ENCODE measurements at regions of chr14 and their contacts with region 1.

Region 1: GRCh38 chr14:55832974-55833373 is 253.0 kb downstream of the KTN1 start:
- DNase-seq: no peak
- H3K4me3 Mint-ChIP-seq: no peak overlapping the region
- H3K27ac Mint-ChIP-seq: no peak overlapping the region
- H3K4me1 Mint-ChIP-seq: no peaks in the 10 kb centered on the region
- H3K27me3 Mint-ChIP-seq: no peaks in the 10 kb centered on the region
- CTCF ChIP-seq: no peak

Region 2: GRCh38 chr14:55843718-55844403 is 10.9 kb after region 1 on chr14:
- CTCF ChIA-PET with region 1: interaction called, 10 read pairs
- POLR2A ChIA-PET with region 1: interaction called, 5 read pairs
- intact Hi-C with region 1: no loop called
- DNase-seq: no peak
- H3K4me3 Mint-ChIP-seq: no peak overlapping the region
- H3K27ac Mint-ChIP-seq: no peak overlapping the region
- H3K4me1 Mint-ChIP-seq: peaks cover 16% of the 10 kb centered on the region
- H3K27me3 Mint-ChIP-seq: no peaks in the 10 kb centered on the region
- CTCF ChIP-seq: peak; percentile 30

Region 3: GRCh38 chr14:55893705-55894104 is 60.7 kb after region 1 on chr14:
- CTCF ChIA-PET with region 1: no interaction called
- POLR2A ChIA-PET with region 1: no interaction called
- intact Hi-C with region 1: no loop called
- DNase-seq: no peak
- H3K4me3 Mint-ChIP-seq: no peak overlapping the region
- H3K27ac Mint-ChIP-seq: no peak overlapping the region
- H3K4me1 Mint-ChIP-seq: peaks cover 5% of the 10 kb centered on the region
- H3K27me3 Mint-ChIP-seq: no peaks in the 10 kb centered on the region
- CTCF ChIP-seq: no peak